ENCODE measurements at regions of chrX and their contacts with region 1.

Region 1: DNA sequence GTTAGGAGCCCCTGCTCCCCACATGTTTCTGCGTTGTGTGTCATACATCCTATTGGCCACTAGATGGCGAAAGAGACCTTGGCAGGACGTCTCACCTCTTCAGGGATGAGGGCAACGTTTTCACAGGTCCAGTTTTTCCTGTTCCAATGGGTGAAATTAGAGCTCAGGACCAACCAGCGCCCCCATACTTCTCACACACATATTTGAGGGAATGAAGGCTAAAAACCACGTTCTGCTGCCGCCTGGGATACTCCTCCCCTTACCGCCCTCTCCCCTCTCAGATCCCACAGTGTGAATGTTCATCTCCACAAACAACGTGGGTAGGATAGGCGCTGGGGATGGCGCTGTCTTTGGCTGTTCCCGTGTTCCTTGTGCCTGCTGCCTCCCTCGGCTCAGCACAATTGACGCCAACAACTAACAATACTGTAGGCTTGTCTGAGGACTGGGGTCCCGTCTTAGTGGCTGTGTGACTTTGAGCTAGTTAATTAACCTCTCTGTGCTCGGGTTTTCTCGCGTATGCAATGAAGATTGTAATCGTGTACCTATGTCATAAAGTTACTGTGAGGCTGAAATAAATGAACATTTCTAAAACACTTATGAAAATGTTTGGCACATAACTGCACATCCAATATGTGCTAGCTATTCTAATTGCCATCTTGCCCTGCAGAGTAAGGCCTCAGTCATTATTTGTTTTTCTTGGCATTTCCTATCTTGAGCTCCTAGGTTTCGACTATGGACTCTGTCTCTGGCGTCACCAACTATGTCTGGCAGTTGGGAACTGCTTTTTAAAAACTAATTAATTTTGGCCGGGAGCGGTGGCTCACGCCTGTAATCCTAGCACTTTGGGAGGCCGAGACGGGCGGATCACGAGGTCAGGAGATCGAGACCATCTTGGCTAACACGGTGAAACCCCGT is 181.3 kb upstream of the STK26 start:
- DNase-seq: peak; percentile 24
- H3K4me3 Mint-ChIP-seq: no peak overlapping the region
- H3K27ac Mint-ChIP-seq: no peak overlapping the region
- H3K4me1 Mint-ChIP-seq: peaks cover 2% of the 10 kb centered on the region
- H3K27me3 Mint-ChIP-seq: no peaks in the 10 kb centered on the region

Region 2: GRCh38 chrX:131827935-131828334 is 13.8 kb before region 1 on chrX:
- CTCF ChIA-PET with region 1: interaction called, 13 read pairs
- POLR2A ChIA-PET with region 1: no interaction called
- DNase-seq: peak; percentile 67
- H3K4me3 Mint-ChIP-seq: peak overlapping the region; percentile 79
- H3K27ac Mint-ChIP-seq: peak overlapping the region; percentile 83
- H3K4me1 Mint-ChIP-seq: peaks cover 51% of the 10 kb centered on the region
- H3K27me3 Mint-ChIP-seq: no peaks in the 10 kb centered on the region

Measured in activated CD4-positive, alpha-beta memory T cell treated with anti-CD3 and anti-CD28 coated beads, Interleukin-2, amount 10 ng/mL, durations not matched to agents 7 days and 5 days (primary cell).